ENCODE measurements at regions of chr1 and their contacts with region 1.

Region 1: GRCh38 chr1:101288491-101288944 is 51.7 kb downstream of the S1PR1 start:
- DNase-seq: peak; percentile 39 to 89 (median 73)
- ATAC-seq: peak; percentile 66
- H3K4me3 ChIP-seq: no peak overlapping the region
- H3K4me3 Mint-ChIP-seq: no peak overlapping the region
- H3K27ac ChIP-seq: peak overlapping the region in 1 of 2 experiments; percentile 40
- H3K27ac Mint-ChIP-seq: peak overlapping the region; percentile 86
- H3K4me1 ChIP-seq: peaks cover 69% of the 10 kb centered on the region
- H3K4me1 Mint-ChIP-seq: peaks cover 73% of the 10 kb centered on the region
- H3K27me3 ChIP-seq: no peaks in the 10 kb centered on the region
- H3K27me3 Mint-ChIP-seq: no peaks in the 10 kb centered on the region
- CTCF ChIP-seq: peak; percentile 93

Region 2: DNA sequence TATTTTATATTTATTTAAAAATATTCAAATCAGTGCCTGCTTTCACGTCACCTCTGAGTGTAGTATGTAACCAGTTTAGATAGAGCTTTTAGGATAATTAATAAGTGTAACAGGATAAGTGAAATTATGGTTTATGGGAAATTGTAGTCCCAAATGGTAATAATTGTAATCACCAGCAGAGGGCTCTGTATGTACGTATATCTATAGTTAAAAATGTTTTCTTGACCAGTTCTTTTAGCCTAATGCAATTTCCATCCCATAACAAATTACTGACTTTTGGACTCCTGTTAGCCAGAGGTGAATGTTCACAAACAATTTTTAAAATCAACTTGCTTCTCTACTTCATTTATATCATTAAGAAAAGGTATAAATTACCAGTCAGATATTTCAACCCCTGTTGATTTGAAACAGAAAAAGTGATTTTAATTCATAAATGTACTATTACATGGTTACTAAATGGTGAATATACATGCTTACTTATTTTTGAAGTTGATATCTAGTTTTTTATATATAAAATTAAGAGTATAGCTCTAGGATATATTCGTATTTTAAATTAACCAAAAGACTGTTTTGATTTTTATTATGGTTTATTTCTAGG is 367.3 kb before region 1 on chr1:
- CTCF ChIA-PET with region 1: interaction called, 37 read pairs
- POLR2A ChIA-PET with region 1: interaction called, 4 read pairs
- intact Hi-C with region 1: loop called (anchors 1 kb)
- DNase-seq: peak in 2 of 9 experiments; percentile 70 to 77
- ATAC-seq: peak; percentile 45
- H3K4me3 ChIP-seq: no peak overlapping the region
- H3K4me3 Mint-ChIP-seq: no peak overlapping the region
- H3K27ac ChIP-seq: no peak overlapping the region
- H3K27ac Mint-ChIP-seq: peak overlapping the region; percentile 63
- H3K4me1 ChIP-seq: peaks cover 37% of the 10 kb centered on the region
- H3K4me1 Mint-ChIP-seq: peaks cover 41% of the 10 kb centered on the region
- H3K27me3 ChIP-seq: no peaks in the 10 kb centered on the region
- H3K27me3 Mint-ChIP-seq: no peaks in the 10 kb centered on the region
- CTCF ChIP-seq: peak; percentile 99

Region 3: GRCh38 chr1:101025657-101026504 is 262.6 kb before region 1 on chr1 and contains the start of gene DPH5:
- CTCF ChIA-PET with region 1: interaction called, 3 read pairs
- POLR2A ChIA-PET with region 1: no interaction called
- intact Hi-C with region 1: loop called (anchors 1 to 5 kb)
- DNase-seq: peak; percentile 73 to 91 (median 88)
- ATAC-seq: peak; percentile 95
- H3K4me3 ChIP-seq: peak within 1 kb of the TSS; percentile 75 to 96
- H3K4me3 Mint-ChIP-seq: peak within 1 kb of the TSS; percentile 90
- H3K27ac ChIP-seq: peak within 1 kb of the TSS; percentile 71 to 77
- H3K27ac Mint-ChIP-seq: peak within 1 kb of the TSS; percentile 98
- H3K4me1 ChIP-seq: peaks cover 52% of the 10 kb centered on the region
- H3K4me1 Mint-ChIP-seq: peaks cover 83% of the 10 kb centered on the region
- H3K27me3 ChIP-seq: no peaks in the 10 kb centered on the region
- H3K27me3 Mint-ChIP-seq: no peaks in the 10 kb centered on the region
- CTCF ChIP-seq: no peak
- total RNA-seq, gene DPH5: 32.1 to 40.7 TPM

Region 4: DNA sequence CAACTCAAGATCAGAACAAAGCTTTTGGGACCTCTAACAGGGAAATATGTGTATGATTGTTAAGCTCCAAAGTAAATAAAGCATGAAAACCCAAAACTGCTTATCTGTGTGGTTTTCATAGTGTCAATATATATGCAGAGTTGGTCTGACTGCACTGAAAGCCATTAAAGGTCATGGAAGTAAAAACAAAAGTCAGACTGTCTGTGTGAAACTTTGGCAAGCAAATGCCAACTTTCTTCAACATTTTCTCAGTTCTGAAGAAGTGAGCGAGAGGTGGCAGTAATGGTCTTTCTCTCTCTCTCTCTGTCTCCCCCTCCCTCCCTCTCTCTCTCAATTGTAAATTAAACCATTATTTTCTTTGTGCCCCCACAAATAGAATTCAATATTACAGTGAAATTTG is 151.8 kb before region 1 on chr1:
- CTCF ChIA-PET with region 1: interaction called, 136 read pairs
- POLR2A ChIA-PET with region 1: interaction called, 4 read pairs
- intact Hi-C with region 1: loop called (anchors 1 kb)
- DNase-seq: peak in 4 of 9 experiments; percentile 21 to 78 (median 50)
- ATAC-seq: peak; percentile 76
- H3K4me3 ChIP-seq: no peak overlapping the region
- H3K4me3 Mint-ChIP-seq: peak overlapping the region; percentile 13
- H3K27ac ChIP-seq: peak overlapping the region; percentile 12 to 50
- H3K27ac Mint-ChIP-seq: peak overlapping the region; percentile 85
- H3K4me1 ChIP-seq: peaks cover 35% of the 10 kb centered on the region
- H3K4me1 Mint-ChIP-seq: peaks cover 60% of the 10 kb centered on the region
- H3K27me3 ChIP-seq: no peaks in the 10 kb centered on the region
- H3K27me3 Mint-ChIP-seq: no peaks in the 10 kb centered on the region
- CTCF ChIP-seq: peak; percentile 58

Region 5: DNA sequence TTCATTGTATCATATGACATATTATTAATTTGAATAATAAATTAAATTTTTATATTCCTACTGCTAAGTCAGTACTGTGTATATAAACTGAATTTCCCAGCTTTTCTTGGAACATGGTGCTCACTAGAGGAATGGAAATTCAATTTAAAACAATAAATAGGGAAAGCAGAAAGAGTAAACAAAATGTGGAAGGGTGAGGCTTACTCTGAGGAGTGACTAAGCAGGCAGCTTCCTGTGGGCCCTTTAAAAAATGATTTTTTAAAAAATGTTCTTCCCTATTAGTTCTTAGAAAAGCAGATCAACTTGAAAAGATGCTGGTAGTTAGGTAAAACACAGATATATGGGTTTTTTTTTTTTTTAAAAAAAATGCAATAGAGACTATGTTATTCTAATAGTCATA is 101.2 kb before region 1 on chr1:
- CTCF ChIA-PET with region 1: no interaction called
- POLR2A ChIA-PET with region 1: no interaction called
- intact Hi-C with region 1: no loop called
- DNase-seq: no peak
- ATAC-seq: no peak
- H3K4me3 ChIP-seq: no peak overlapping the region
- H3K4me3 Mint-ChIP-seq: no peak overlapping the region
- H3K27ac ChIP-seq: no peak overlapping the region
- H3K27ac Mint-ChIP-seq: no peak overlapping the region
- H3K4me1 ChIP-seq: no peaks in the 10 kb centered on the region
- H3K4me1 Mint-ChIP-seq: peaks cover 9% of the 10 kb centered on the region
- H3K27me3 ChIP-seq: no peaks in the 10 kb centered on the region
- H3K27me3 Mint-ChIP-seq: no peaks in the 10 kb centered on the region
- CTCF ChIP-seq: no peak

Region 6: DNA sequence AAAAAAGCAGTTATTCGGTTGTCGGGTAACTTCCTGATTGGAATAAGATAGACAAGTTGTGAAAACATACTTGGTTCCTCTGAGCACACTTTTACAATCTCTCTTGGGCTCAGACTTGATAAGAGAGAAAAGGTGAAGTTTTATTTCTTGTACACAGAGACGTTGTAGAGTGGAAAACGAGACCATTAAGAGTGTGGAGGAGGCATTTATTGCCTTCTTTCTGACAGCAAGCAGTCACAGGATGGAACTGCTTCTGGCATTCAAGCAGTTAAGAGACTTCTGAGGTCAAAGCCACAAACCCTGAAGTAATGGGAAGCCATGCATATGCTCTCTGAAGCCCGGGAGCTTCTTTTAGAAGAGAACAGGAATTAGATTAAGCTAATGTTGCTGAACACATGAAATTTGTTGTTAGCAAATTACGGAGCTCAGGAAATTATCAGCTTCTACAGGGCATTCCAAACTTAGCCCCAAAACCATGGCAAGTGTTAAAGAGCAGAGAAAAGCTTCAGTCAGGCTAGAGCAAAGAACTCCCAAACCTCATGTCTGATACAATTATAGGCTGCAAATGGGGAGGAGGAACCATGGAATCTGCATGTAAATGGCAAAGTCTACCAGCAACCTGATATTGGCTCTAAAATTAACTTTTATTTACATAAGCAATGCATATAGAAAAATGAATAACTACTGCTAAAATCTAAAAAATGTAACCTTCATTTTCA is 25.7 kb before region 1 on chr1:
- CTCF ChIA-PET with region 1: interaction called, 21 read pairs
- POLR2A ChIA-PET with region 1: interaction called, 5 read pairs
- intact Hi-C with region 1: loop called in 1 of 2 experiments (anchors 1 kb)
- DNase-seq: peak in 3 of 9 experiments; percentile 22 to 67 (median 48)
- ATAC-seq: peak; percentile 49
- H3K4me3 ChIP-seq: peak overlapping the region in 1 of 2 experiments; percentile 7
- H3K4me3 Mint-ChIP-seq: peak overlapping the region; percentile 46
- H3K27ac ChIP-seq: peak overlapping the region in 1 of 2 experiments; percentile 52
- H3K27ac Mint-ChIP-seq: peak overlapping the region; percentile 65
- H3K4me1 ChIP-seq: peaks cover 89% of the 10 kb centered on the region
- H3K4me1 Mint-ChIP-seq: peaks cover 86% of the 10 kb centered on the region
- H3K27me3 ChIP-seq: no peaks in the 10 kb centered on the region
- H3K27me3 Mint-ChIP-seq: no peaks in the 10 kb centered on the region
- CTCF ChIP-seq: no peak

Region 7: DNA sequence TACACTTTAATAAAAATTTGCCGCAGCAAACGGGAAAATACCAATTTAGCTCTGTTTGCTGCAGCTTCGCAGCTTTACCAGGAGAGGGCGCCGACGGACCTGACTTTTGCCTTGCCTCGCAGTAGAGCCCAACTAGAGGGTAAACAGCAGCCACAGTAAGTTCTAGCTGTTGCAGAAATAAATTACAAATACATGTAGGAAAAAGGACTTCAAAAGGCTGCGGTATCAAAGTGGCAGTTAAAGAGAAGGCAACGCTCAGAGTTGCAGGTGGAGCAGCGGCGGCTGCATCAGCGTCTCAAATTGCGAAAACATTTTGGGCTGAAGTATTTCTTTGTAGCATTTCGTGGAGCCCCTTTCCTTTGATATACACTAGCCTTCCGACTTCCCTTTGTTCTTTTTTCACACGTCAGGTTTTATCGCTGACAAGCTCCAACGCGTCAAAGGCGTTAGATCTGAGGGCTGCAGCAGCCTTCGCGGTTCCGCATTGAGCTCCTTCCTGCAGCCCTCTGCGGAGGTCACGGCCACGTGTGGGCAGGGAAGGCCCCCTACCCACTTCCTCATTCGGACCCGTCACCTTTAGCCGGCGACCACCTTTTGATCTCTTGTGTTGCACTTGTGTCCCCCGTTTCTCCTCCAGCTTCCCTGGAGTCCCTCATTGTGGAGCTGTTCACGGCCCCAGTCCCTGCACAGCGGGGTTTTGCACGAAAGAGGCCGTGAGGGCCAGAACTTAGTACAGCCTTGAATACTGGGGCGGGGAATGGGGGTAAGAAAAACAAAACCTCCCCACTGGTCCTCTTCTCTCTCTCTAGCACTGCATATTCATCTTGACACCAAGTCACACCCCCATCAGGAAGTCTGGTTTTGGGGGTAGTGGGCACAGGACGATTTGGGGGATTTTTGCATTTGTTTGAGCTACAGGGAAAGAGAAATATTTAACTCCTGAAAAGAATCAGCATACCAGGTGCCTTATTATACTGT is 21.1 kb after region 1 on chr1:
- CTCF ChIA-PET with region 1: interaction called, 61 read pairs
- POLR2A ChIA-PET with region 1: interaction called, 9 read pairs
- intact Hi-C with region 1: no loop called
- DNase-seq: peak; percentile 57 to 96 (median 80)
- ATAC-seq: peak; percentile 75
- H3K4me3 ChIP-seq: peak overlapping the region; percentile 34 to 44
- H3K4me3 Mint-ChIP-seq: peak overlapping the region; percentile 82
- H3K27ac ChIP-seq: peak overlapping the region; percentile 82 to 87
- H3K27ac Mint-ChIP-seq: peak overlapping the region; percentile 99
- H3K4me1 ChIP-seq: peaks cover 58% of the 10 kb centered on the region
- H3K4me1 Mint-ChIP-seq: peaks cover 73% of the 10 kb centered on the region
- H3K27me3 ChIP-seq: no peaks in the 10 kb centered on the region
- H3K27me3 Mint-ChIP-seq: no peaks in the 10 kb centered on the region
- CTCF ChIP-seq: peak; percentile 85

Region 8: DNA sequence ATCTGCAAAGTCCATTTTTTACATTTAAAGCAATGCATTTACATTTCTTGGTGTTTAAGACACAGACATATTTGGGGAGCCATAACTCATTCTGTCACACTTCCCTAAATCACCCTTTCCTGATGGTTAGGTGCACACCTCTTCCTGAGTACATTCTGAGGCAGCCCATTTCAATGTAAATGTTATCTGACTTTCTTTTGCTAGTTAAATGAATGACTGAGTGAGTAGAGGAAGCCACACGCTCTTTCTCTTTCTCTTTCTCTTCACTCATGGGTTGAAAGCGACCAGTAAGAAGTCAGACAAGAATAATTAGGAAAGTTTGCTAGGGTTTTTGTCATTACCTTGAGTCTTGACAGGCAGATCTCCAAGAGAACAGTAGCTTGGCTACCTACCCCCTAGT is 91.4 kb after region 1 on chr1:
- CTCF ChIA-PET with region 1: no interaction called
- POLR2A ChIA-PET with region 1: no interaction called
- intact Hi-C with region 1: no loop called
- DNase-seq: no peak
- ATAC-seq: no peak
- H3K4me3 ChIP-seq: no peak overlapping the region
- H3K4me3 Mint-ChIP-seq: no peak overlapping the region
- H3K27ac ChIP-seq: no peak overlapping the region
- H3K27ac Mint-ChIP-seq: no peak overlapping the region
- H3K4me1 ChIP-seq: no peaks in the 10 kb centered on the region
- H3K4me1 Mint-ChIP-seq: peaks cover 4% of the 10 kb centered on the region
- H3K27me3 ChIP-seq: no peaks in the 10 kb centered on the region
- H3K27me3 Mint-ChIP-seq: no peaks in the 10 kb centered on the region
- CTCF ChIP-seq: no peak